ENCODE measurements at regions of chr20 and their contacts with region 1.

Region 1: DNA sequence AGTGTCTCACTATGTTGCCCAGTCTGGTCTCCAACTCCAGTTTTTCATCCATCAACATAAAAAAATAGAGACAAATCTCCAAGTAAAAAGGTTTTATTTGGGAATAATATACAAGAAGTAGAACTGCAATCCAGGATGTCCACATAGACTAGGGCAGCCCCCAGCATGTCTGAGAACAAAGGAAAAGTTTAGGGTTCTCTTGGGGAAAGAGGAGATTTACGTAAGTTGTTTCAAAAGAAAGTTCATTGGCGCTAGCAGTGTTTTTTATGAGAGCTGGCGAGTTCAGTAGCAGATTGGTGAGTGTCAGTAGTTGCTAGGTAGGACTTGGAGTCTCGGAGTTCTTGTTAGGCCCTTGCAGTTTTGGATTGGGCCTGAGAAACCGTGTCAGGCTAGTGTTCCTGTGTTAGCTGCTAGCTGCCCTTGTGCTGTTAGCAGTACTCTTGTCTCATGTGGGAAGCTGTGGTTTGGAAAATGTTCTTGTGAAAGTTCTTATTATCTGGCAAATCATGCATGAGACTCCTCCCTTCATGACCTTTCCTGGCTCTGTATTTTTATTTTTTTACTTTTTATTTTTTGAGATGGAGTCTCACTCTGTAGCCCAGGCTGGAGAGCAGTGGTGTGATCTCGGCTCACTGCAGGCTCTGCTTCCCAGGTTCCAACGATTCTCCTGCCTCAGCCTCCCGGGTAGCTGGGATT is 24.7 kb downstream of the TTLL9 start:
- DNase-seq: no peak
- H3K4me3 ChIP-seq: no peak overlapping the region
- H3K27ac ChIP-seq: no peak overlapping the region
- H3K4me1 ChIP-seq: no peaks in the 10 kb centered on the region
- H3K27me3 ChIP-seq: peaks cover 17% of the 10 kb centered on the region
- CTCF ChIP-seq: no peak

Region 2: GRCh38 chr20:31967830-31968249 is 72.7 kb after region 1 on chr20 and contains the start of gene XKR7:
- CTCF ChIA-PET with region 1: no interaction called
- POLR2A ChIA-PET with region 1: interaction called, 12 read pairs
- intact Hi-C with region 1: no loop called
- DNase-seq: no peak
- H3K4me3 ChIP-seq: no peak within 1 kb of the TSS
- H3K27ac ChIP-seq: no peak within 1 kb of the TSS
- H3K4me1 ChIP-seq: no peaks in the 10 kb centered on the region
- H3K27me3 ChIP-seq: peaks cover 52% of the 10 kb centered on the region
- CTCF ChIP-seq: no peak
- total RNA-seq, gene XKR7: not detected in 2 replicates

Measured in PC-9 (cell line).